Activated CD8-positive, alpha-beta T cell treated with anti-CD3 and anti-CD28 coated beads for 36 hours (primary cell): ENCODE measurements at regions of chr11 and their contacts with region 1.

Region 1: DNA sequence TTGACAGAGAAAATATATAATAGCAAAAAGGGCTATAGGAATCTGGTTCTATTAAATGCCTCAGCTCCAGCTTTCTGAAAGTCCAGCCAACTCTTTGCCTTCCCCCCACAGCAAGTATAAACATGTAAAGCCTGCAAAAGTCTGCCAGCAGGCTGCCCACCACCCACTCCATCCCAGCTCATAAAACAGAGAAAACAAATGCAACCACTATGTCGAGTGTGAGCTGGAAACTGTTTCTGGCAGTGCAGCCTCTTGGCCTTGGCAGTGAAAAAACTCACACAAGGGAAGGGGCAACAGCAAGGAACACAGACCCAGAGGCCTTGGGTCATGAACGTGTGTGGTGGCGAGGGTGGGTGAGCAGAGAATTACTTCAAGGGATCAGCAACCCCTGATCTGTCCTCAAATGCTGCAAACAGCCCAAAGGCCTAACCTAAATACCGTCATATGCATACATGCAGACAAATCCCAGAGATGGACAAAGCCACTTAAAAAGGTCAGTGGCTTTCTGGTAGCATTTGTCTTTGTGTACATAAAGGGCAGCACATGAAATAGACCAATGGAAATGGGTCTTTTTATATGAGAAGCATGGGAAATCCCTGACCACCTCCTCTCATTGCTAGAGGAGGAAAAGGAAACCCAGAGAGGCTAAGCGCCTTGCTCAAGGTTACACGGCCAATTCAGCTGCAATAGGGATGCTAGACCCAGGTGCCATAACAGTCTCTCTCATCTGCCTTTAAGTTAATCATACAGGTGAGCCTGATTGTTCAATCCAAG is 74.8 kb downstream of the NAT10 start:
- DNase-seq: peak; percentile 38
- ATAC-seq: peak; percentile 68
- H3K4me3 Mint-ChIP-seq: no peak overlapping the region
- H3K27ac Mint-ChIP-seq: peak overlapping the region; percentile 61
- H3K4me1 Mint-ChIP-seq: peaks cover 36% of the 10 kb centered on the region
- H3K27me3 Mint-ChIP-seq: no peaks in the 10 kb centered on the region
- CTCF ChIP-seq: no peak

Region 2: GRCh38 chr11:34234086-34234740 is 54.0 kb after region 1 on chr11:
- CTCF ChIA-PET with region 1: interaction called, 17 read pairs
- POLR2A ChIA-PET with region 1: interaction called, 3 read pairs
- intact Hi-C with region 1: loop called (anchors 5 kb)
- DNase-seq: peak; percentile 92
- ATAC-seq: peak; percentile 91
- H3K4me3 Mint-ChIP-seq: peak overlapping the region; percentile 27
- H3K27ac Mint-ChIP-seq: peak overlapping the region; percentile 86
- H3K4me1 Mint-ChIP-seq: peaks cover 70% of the 10 kb centered on the region
- H3K27me3 Mint-ChIP-seq: no peaks in the 10 kb centered on the region
- CTCF ChIP-seq: no peak

Region 3: GRCh38 chr11:34357701-34358257 is 177.6 kb after region 1 on chr11 and contains the start of gene ABTB2:
- CTCF ChIA-PET with region 1: interaction called, 85 read pairs
- POLR2A ChIA-PET with region 1: interaction called, 11 read pairs
- intact Hi-C with region 1: no loop called
- DNase-seq: peak; percentile 99
- ATAC-seq: peak; percentile 92
- H3K4me3 Mint-ChIP-seq: peak within 1 kb of the TSS; percentile 76
- H3K27ac Mint-ChIP-seq: peak within 1 kb of the TSS; percentile 77
- H3K4me1 Mint-ChIP-seq: peaks cover 28% of the 10 kb centered on the region
- H3K27me3 Mint-ChIP-seq: peaks cover 35% of the 10 kb centered on the region
- CTCF ChIP-seq: no peak
- total RNA-seq, gene ABTB2: 2.4 to 2.5 TPM